ENCODE measurements at regions of chr12 and their contacts with region 1.

Region 1: GRCh38 chr12:48851883-48852733 is at the start of gene DDX23:
- DNase-seq: peak; percentile 82 to 91
- H3K4me3 ChIP-seq: peak within 1 kb of the TSS; percentile 88 to 100 (median 98)
- H3K27ac ChIP-seq: peak within 1 kb of the TSS; percentile 85
- H3K4me1 ChIP-seq: peaks cover 0 to 10% (median 7%) of the 10 kb centered on the region in 4 experiments; a peak in 5 of 7 replicates
- H3K27me3 ChIP-seq: no peaks in the 10 kb centered on the region
- CTCF ChIP-seq: no peak
- EP300 ChIP-seq: no peak
- POLR2A ChIP-seq: peak; percentile 45 to 89
- RAD21 ChIP-seq: no peak
- total RNA-seq, gene DDX23: 98.1 and 107 TPM in 2 replicates

Region 2: DNA sequence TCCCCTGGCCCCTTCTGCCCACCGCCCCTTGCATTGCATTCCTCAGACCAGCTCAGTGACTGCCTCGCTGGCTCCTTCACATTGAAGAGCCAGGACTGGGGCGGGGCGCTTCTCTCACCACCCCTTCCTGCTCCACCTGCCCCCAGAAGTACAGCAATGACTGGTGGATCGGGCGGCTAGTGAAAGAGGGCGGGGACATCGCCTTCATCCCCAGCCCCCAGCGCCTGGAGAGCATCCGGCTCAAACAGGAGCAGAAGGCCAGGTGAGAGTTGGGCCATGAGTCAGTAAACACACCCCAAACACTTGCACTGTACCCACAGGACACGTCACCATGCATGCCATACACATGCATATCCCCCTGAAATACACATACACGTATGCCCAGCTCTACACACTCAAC is 28.0 kb before region 1 on chr12:
- CTCF ChIA-PET with region 1: interaction called, 6 read pairs
- POLR2A ChIA-PET with region 1: interaction called, 48 read pairs
- DNase-seq: no peak
- H3K4me3 ChIP-seq: no peak overlapping the region
- H3K27ac ChIP-seq: no peak overlapping the region
- H3K4me1 ChIP-seq: peaks cover 0 to 13% (median 7%) of the 10 kb centered on the region in 4 experiments; a peak in 4 of 7 replicates
- H3K27me3 ChIP-seq: peaks cover 0 to 13% (median 6%) of the 10 kb centered on the region in 4 experiments; a peak in 5 of 7 replicates
- CTCF ChIP-seq: no peak
- EP300 ChIP-seq: no peak
- POLR2A ChIP-seq: no peak
- RAD21 ChIP-seq: no peak

Region 3: DNA sequence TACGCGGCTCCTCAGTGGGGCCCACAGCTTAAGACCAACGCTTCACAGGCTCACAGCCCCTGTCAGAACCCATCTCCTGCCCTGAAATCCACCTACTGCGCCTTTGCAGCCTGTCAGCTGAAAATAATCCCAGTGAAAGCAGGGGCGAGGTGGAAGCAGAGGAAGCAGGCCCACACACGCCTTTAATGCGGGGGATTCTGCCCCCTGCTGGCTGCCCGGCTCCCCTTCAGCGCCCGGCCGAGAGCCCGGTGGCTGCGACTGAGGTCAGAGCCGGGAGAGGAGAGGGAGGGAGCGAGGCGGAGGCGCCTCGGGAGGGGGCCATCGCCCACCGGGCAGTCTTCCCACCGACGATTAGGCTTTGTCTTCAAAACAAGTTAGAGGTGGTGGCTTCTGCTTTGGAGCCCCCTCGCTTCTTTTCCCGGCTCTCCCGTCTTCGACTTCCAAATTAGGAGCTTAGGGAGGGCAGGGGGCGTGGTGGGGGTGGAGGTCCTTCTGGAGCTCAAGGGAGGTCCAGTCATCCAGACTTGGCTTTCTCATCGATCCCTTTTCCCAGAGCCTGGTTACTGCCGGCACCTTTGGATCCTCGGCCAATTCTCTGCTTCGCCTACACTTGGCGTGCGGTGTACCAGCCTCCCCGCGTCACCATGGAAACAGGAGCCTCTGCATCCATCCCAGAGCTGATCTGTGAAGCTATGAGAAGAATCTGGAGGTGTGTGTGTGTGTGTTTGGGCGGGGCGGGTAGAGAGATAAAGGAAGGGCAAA is 38.7 kb after region 1 on chr12:
- CTCF ChIA-PET with region 1: interaction called, 678 read pairs
- POLR2A ChIA-PET with region 1: interaction called, 651 read pairs
- DNase-seq: peak; percentile 51 to 96
- H3K4me3 ChIP-seq: peak overlapping the region; percentile 10 to 65 (median 22)
- H3K27ac ChIP-seq: no peak overlapping the region
- H3K4me1 ChIP-seq: 0 out of 7 replicates have a peak, but pooled peaks cover 0 to 6% (median 2%) of the 10 kb centered on the region in 4 experiments
- H3K27me3 ChIP-seq: no peaks in the 10 kb centered on the region; a peak in 2 of 7 replicates
- CTCF ChIP-seq: peak; percentile 86 to 95 (median 91)
- EP300 ChIP-seq: no peak
- POLR2A ChIP-seq: no peak
- RAD21 ChIP-seq: peak; percentile 90 to 96

Region 4: DNA sequence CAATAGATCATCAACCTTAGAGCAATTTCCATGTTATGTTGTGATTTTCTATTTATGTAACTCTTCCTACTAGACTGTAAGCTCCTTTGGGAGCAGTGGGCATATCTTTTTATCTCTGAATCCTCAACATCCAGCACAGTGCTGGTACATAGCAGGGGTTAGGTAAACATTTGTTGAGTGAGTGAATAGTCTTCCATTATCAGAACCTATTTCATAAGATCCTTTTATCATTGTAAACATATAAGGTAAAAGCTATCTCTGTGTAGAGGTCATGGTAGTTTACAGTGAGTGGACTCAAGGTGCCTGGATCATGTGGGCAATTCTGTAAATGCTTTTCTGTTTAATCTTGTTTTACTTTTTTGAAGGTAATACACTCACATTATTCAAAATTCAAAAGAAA is 58.1 kb after region 1 on chr12:
- CTCF ChIA-PET with region 1: interaction called, 25 read pairs
- POLR2A ChIA-PET with region 1: interaction called, 3 read pairs
- DNase-seq: no peak
- H3K4me3 ChIP-seq: no peak overlapping the region
- H3K27ac ChIP-seq: no peak overlapping the region
- H3K4me1 ChIP-seq: no peaks in the 10 kb centered on the region
- H3K27me3 ChIP-seq: no peaks in the 10 kb centered on the region
- CTCF ChIP-seq: no peak
- EP300 ChIP-seq: no peak
- POLR2A ChIP-seq: no peak
- RAD21 ChIP-seq: no peak

Region 5: DNA sequence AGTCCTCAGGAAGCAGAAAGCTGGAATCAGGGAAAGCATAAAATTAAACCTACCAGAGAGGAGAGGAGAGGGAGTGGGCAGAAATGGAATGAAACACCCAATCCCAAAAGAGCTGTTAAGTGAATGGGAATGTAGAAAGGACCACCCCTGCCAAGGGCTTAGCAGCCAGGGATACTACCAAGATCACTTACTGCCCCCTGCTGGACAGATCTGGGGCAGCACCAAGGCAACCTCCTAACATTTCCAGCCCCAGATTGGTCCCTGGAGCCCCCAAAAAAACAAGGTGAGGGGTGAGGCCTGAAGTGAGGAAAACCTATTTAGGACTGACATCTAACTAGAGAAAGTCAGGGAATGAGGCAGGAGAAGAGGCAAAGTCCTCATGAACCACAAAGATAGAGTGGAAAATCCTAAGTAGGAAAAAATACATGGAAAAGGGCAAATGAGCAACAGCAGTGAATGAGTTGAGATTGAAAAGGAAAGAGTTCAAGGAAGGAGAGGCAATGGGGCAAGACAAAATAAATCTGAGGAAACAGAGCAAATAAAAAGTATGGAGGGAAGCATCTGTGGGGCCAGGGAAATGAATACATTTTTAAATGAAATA is 84.4 kb after region 1 on chr12:
- CTCF ChIA-PET with region 1: interaction called, 85 read pairs
- POLR2A ChIA-PET with region 1: interaction called, 4 read pairs
- DNase-seq: peak; percentile 63 to 97
- H3K4me3 ChIP-seq: no peak overlapping the region
- H3K27ac ChIP-seq: no peak overlapping the region
- H3K4me1 ChIP-seq: no peaks in the 10 kb centered on the region
- H3K27me3 ChIP-seq: no peaks in the 10 kb centered on the region
- CTCF ChIP-seq: peak; percentile 84 to 97 (median 93)
- EP300 ChIP-seq: no peak
- POLR2A ChIP-seq: no peak
- RAD21 ChIP-seq: peak; percentile 67 to 72

Region 6: DNA sequence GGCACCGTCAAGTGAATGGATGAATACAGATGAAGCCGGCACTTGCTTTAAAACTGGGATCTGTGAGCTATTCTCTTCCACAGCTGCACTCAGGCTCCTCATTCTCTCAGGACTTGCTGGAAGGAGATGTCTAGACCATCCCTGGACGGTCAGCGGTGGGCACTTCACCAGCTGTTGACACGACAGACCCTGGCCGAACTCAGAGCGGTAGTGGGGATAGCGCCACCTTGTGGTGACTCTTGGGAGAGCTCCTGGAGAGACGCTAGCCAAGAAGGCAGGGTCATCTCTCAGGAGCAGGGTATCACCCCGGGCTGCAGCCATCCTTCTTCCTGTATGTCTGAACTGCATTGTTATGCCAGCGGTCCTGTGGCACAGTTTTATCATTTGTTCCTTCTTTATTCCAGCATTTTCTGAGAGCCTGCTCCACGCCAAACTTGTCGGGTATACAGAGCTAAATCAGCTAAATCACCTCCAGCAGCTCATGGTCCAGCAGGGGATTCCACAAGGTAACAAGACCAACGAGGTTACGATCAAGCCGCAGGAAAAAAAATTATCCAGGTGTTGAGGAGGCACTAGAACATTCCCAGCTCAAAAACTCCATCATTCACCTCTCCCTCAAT is 136.0 kb after region 1 on chr12:
- CTCF ChIA-PET with region 1: interaction called, 11 read pairs
- POLR2A ChIA-PET with region 1: no interaction called
- DNase-seq: peak in 1 of 2 experiments; percentile 98
- H3K4me3 ChIP-seq: no peak overlapping the region
- H3K27ac ChIP-seq: no peak overlapping the region
- H3K4me1 ChIP-seq: peaks cover 0 to 4% (median 0%) of the 10 kb centered on the region in 4 experiments; a peak in 2 of 7 replicates
- H3K27me3 ChIP-seq: peaks cover 18 to 55% (median 44%) of the 10 kb centered on the region in 4 experiments
- CTCF ChIP-seq: peak in 2 of 3 experiments; percentile 86 to 98; a peak in 3 of 4 replicates
- EP300 ChIP-seq: no peak
- POLR2A ChIP-seq: no peak
- RAD21 ChIP-seq: peak; percentile 56 to 65